Transverse colon (tissue), 4 donors: ENCODE measurements at regions of chr9 and their contacts with region 1.

Region 1: GRCh38 chr9:132439153-132439552 is 29.1 kb downstream of the CFAP77 start:
- DNase-seq: no peak
- H3K4me3 ChIP-seq: no peak overlapping the region
- H3K27ac ChIP-seq: no peak overlapping the region
- H3K4me1 ChIP-seq: no peaks in the 10 kb centered on the region
- H3K27me3 ChIP-seq: peaks cover 64% of the 10 kb centered on the region
- CTCF ChIP-seq: no peak
- EP300 ChIP-seq: no peak
- POLR2A ChIP-seq: no peak

Region 2: DNA sequence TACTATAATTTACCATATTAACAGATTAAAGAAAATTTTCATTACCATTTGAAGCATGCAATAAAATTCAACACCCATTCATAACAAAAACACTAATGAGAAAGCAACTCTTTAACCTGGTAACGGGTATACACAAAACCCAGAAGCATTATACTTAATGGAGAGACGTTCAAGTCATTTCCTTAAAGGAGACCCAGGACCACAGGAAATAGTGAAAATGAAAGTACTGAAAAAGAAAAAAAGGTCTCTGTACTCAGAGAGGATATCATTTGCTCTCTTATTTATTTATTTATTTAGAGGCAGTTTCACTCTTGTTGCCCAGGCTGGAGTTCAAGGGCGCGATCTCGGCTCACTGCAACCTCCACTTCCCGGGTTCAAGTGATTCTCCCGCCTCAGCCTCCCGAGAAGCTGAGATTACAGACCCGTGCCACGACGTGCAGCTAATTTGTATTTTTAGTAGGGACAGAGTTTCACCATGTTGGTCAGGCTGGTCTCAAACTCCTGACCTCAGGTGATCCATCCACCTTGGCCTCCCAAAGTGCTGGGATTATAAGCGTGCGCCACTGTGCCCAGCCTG is 145.9 kb before region 1 on chr9:
- in situ Hi-C with region 1: no loop called
- intact Hi-C with region 1: no loop called
- DNase-seq: no peak
- H3K4me3 ChIP-seq: no peak overlapping the region
- H3K27ac ChIP-seq: no peak overlapping the region
- H3K4me1 ChIP-seq: peaks cover 0 to 4% (median 0%) of the 10 kb centered on the region in 4 donors
- H3K27me3 ChIP-seq: no peaks in the 10 kb centered on the region
- CTCF ChIP-seq: no peak
- EP300 ChIP-seq: no peak
- POLR2A ChIP-seq: no peak

Region 3: DNA sequence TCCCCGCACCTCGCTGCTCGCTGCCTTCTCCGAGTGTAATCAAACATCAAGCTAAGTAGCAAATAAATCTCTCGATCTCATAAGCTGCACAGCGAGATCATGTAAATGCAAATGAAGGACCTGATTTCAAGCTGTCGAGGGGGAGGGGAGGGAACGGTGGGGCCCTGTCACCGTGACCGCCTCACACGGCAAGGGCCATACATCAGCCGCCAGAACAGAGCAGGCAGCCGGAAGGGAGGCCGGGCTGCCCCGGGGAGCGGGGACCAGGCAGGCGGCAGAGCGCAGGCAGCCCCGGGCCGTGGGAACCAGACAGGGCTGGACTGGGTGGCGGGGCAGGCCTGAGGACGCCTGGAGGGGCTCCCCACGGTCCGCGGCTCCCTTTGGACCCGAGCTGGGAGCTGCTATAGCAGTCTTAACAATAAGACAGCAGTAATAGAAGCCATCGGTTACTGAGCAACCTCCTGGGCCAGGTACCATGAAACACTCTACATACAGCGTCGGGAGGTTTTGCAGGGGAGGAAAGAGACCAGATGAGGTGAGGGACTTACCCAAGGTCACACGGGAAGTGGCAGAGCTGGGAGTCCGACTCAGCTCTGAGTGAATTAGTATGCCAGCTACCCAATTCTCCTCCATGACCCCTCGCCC is 47.7 kb after region 1 on chr9:
- in situ Hi-C with region 1: no loop called
- intact Hi-C with region 1: loop called (anchors 1 kb)
- DNase-seq: no peak
- H3K4me3 ChIP-seq: no peak overlapping the region
- H3K27ac ChIP-seq: no peak overlapping the region
- H3K4me1 ChIP-seq: no peaks in the 10 kb centered on the region
- H3K27me3 ChIP-seq: peaks cover 86% of the 10 kb centered on the region
- CTCF ChIP-seq: no peak
- EP300 ChIP-seq: no peak
- POLR2A ChIP-seq: no peak

Region 4: DNA sequence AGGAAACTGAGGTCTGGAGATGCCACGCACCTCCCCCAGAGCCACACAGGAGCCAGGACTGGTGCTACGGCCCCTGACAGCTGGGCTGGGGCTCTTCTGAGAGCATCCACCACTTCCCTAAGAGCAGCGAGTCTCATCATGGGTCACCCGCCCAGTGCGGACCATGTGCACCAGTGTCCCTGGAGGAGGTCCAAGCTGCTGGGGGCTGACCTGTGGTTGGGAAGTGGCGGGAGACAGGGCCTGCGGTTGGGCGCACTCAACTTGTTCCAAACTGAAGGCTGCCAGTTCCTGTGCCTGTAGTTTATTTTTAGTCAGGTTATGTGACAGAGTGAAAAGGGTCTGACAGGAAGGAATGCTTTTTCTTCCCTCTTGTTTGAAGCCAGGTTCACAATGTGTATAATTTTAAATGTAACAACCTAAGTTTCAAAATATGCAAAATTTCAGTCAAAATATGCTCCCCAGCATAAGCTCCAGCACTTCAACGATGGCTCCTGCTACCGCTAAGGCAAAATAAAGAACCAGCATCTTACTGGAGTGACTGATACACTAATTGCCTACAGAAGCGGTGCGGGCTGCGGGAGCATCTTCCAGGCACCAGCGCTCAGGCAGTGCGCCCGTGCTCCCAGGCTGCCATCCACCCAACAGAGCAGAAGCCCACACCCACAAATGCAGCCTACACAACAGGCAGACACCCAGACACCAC is 158.1 kb after region 1 on chr9:
- in situ Hi-C with region 1: no loop called
- intact Hi-C with region 1: no loop called
- DNase-seq: no peak
- H3K4me3 ChIP-seq: no peak overlapping the region
- H3K27ac ChIP-seq: no peak overlapping the region
- H3K4me1 ChIP-seq: no peaks in the 10 kb centered on the region
- H3K27me3 ChIP-seq: peaks cover 5% of the 10 kb centered on the region
- CTCF ChIP-seq: no peak
- EP300 ChIP-seq: no peak
- POLR2A ChIP-seq: no peak

Region 5: GRCh38 chr9:132721661-132722060 is 282.5 kb after region 1 on chr9:
- in situ Hi-C with region 1: no loop called
- intact Hi-C with region 1: no loop called
- DNase-seq: no peak
- H3K4me3 ChIP-seq: no peak overlapping the region
- H3K27ac ChIP-seq: no peak overlapping the region
- H3K4me1 ChIP-seq: no peaks in the 10 kb centered on the region
- H3K27me3 ChIP-seq: peaks cover 26% of the 10 kb centered on the region
- CTCF ChIP-seq: no peak
- EP300 ChIP-seq: no peak
- POLR2A ChIP-seq: no peak

Region 6: DNA sequence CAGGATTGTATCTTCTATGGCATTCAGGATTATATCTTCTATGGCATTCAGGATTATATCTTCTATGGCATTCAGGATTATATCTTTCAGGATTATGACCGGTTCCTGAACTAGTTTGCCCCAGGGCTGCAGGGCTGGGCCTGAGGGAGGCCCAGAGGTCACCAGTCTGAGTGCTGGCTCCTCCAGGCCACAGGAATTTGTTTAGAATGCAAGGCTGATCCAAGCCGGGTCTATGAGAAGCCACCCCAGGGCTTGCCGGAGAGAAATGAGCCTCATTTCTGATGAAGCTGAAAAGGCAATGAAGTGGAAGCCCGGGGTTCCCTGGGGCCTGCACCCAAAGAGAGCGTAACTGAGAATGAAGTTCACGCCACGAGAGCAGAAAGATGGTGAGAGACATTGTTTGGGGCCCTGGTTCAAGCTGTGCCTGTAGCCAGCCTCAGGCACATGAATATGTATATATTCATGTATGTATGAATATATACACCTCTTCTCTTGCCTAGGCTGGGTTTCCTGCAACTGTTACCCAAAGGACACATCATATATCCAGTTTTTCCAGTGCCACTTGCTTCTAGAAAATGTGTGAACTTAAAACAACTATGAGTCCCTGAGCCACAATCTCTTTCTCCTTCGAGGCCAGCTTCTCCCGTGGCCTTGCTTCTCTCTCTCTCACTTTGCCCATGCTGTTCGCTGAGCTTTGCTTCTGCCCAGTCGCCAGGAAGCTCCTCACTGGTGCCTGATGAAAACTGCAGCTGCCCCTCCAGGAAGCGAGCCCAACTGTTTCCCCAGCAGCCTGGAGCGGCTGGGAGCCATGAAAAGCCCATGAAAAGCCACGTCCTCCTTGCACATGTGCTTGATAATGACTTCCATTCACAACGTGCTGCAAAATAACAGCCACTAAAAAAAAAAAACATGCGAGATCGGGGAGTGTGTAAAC is 293.4 kb after region 1 on chr9:
- in situ Hi-C with region 1: no loop called
- intact Hi-C with region 1: no loop called
- DNase-seq: no peak
- H3K4me3 ChIP-seq: no peak overlapping the region
- H3K27ac ChIP-seq: no peak overlapping the region
- H3K4me1 ChIP-seq: peaks cover 0 to 7% (median 0%) of the 10 kb centered on the region in 4 donors
- H3K27me3 ChIP-seq: no peaks in the 10 kb centered on the region
- CTCF ChIP-seq: no peak
- EP300 ChIP-seq: no peak
- POLR2A ChIP-seq: no peak